H1 (cell line): ENCODE measurements at regions of chr1 and their contacts with region 1.

Region 1: DNA sequence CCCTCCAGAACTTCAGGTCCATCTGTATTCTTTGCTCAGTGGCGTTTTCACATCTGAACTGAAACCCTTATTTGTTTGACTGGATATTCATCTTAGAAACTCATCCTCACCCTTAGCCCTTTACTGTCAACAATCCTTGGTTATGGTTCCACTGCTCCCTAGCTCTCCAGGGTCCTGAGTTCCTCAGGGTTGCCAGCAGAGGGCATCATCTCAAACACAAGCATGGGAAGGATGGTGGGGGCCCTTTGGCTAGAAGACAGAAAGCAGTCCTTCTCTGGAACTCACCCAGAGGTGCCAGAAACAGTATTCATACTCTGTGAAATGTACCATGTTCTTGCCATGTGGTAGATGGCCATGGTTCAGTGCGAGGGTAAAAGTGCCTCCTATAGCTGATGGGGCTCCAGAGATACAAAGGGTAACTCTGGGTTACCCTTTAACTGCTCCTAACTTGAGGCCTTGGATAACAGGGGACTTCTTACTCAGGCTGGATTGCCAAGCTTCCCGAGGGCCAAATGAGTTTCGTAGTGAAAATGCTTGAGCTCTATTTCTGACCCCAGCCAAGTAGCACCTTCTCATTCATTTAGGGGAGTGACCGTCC is 11.3 kb downstream of the NCSTN start:
- DNase-seq: no peak
- H3K4me3 ChIP-seq: no peak overlapping the region
- H3K27ac ChIP-seq: no peak overlapping the region
- H3K4me1 ChIP-seq: no peaks in the 10 kb centered on the region
- H3K27me3 ChIP-seq: no peaks in the 10 kb centered on the region
- CTCF ChIP-seq: peak; percentile 78 to 83 (median 81)
- EP300 ChIP-seq: no peak
- POLR2A ChIP-seq: no peak
- RAD21 ChIP-seq: peak; percentile 65 to 76

Region 2: GRCh38 chr1:160328184-160328583 is 26.3 kb before region 1 on chr1:
- CTCF ChIA-PET with region 1: interaction called, 17 read pairs
- POLR2A ChIA-PET with region 1: no interaction called
- DNase-seq: no peak
- H3K4me3 ChIP-seq: no peak overlapping the region
- H3K27ac ChIP-seq: no peak overlapping the region
- H3K4me1 ChIP-seq: no peaks in the 10 kb centered on the region
- H3K27me3 ChIP-seq: no peaks in the 10 kb centered on the region
- CTCF ChIP-seq: no peak
- EP300 ChIP-seq: no peak
- POLR2A ChIP-seq: no peak
- RAD21 ChIP-seq: no peak

Region 3: DNA sequence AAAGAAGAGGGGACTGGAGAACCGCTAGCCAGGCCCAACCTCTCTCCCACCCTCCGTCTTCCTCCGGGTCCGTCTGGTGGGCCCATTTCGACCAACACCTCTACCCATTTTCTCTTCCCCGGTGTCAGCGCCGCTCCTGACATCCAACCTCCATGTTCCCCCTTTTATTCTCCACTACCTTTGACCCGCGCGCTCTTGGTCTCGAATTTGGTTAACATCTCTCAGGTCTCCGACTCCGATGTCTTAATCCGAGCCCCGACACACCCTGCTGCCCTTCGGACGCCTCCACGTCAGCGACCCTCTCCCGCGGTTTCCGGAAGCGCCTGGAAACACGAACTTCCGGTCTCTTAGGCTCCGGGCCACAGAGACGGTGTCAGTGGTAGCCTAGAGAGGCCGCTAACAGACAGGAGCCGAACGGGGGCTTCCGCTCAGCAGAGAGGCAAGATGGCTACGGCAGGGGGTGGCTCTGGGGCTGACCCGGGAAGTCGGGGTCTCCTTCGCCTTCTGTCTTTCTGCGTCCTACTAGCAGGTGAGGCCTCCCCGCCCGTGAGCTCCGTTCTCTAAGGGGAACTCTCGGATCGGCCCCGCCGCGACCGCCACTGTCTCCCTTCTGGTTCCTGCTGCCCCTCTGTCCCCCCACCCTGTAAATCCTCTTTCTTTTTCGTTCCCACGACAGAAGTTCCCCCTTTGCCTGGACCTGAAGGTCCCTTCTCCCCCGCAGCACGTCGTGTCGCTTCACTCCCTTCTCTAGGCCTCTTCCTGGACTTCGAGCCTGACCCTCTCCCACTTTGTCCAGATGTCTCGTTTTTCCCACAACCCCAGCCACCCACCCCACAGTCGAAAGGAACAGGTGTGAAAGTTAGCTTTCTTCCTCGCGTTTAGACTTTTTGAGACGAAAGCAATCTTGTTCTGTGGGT is 11.3 kb before region 1 on chr1 and contains the starts of genes COPA and NCSTN:
- CTCF ChIA-PET with region 1: interaction called, 18 read pairs
- POLR2A ChIA-PET with region 1: interaction called, 12 read pairs
- DNase-seq: peak; percentile 71 to 90
- H3K4me3 ChIP-seq: peak within 1 kb of the TSS; percentile 88 to 98 (median 94)
- H3K27ac ChIP-seq: peak within 1 kb of the TSS; percentile 88
- H3K4me1 ChIP-seq: no peaks in the 10 kb centered on the region; a peak in 1 of 7 replicates
- H3K27me3 ChIP-seq: no peaks in the 10 kb centered on the region
- CTCF ChIP-seq: no peak
- EP300 ChIP-seq: no peak
- POLR2A ChIP-seq: peak; percentile 86 to 95
- RAD21 ChIP-seq: no peak
- total RNA-seq, gene COPA: 115 TPM in 2 replicates
- total RNA-seq, gene NCSTN: 64.7 and 70.1 TPM in 2 replicates

Region 4: DNA sequence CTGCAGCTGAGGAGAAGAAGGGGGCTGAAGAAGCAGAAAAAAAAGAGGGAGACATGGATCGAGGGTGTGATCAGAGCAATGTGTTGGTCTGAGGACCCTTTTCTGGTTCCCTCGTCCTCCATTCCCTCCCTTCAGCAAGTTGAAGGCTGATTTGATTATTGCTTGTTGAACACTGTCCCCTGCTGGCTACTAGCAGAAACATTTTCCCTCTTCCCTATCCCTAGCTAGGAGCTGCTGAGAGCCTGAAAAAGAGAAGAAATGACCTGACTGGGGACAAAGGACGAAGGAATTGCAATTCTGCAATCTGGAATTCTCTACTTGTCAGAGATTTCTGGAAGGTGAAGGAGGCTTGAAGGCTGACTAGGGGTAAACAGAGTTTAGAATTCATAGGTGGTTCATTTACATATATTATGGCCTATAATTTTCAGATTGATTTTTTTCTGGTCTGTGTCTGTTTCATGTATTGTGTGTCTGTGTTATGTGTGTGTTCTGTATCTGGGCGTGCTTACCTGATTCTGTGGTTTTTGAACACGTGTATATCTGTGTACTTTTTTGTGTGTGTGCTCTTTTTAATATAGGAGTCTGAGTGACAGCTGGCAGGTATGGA is 22.1 kb after region 1 on chr1:
- CTCF ChIA-PET with region 1: interaction called, 683 read pairs
- POLR2A ChIA-PET with region 1: interaction called, 244 read pairs
- DNase-seq: no peak
- H3K4me3 ChIP-seq: peak overlapping the region in 1 of 4 experiments; percentile 30; a peak in 1 of 8 replicates
- H3K27ac ChIP-seq: no peak overlapping the region
- H3K4me1 ChIP-seq: peaks cover 8 to 21% (median 16%) of the 10 kb centered on the region in 4 experiments
- H3K27me3 ChIP-seq: no peaks in the 10 kb centered on the region
- CTCF ChIP-seq: peak; percentile 20 to 100 (median 94)
- EP300 ChIP-seq: no peak
- POLR2A ChIP-seq: no peak
- RAD21 ChIP-seq: peak; percentile 98 to 99

Region 5: GRCh38 chr1:160398823-160399222 is 44.3 kb after region 1 on chr1:
- CTCF ChIA-PET with region 1: interaction called, 11 read pairs
- POLR2A ChIA-PET with region 1: interaction called, 3 read pairs
- DNase-seq: no peak
- H3K4me3 ChIP-seq: no peak overlapping the region
- H3K27ac ChIP-seq: no peak overlapping the region
- H3K4me1 ChIP-seq: peaks cover 10 to 35% (median 21%) of the 10 kb centered on the region in 4 experiments
- H3K27me3 ChIP-seq: no peaks in the 10 kb centered on the region; a peak in 1 of 7 replicates
- CTCF ChIP-seq: no peak
- EP300 ChIP-seq: no peak
- POLR2A ChIP-seq: no peak
- RAD21 ChIP-seq: no peak

Region 6: DNA sequence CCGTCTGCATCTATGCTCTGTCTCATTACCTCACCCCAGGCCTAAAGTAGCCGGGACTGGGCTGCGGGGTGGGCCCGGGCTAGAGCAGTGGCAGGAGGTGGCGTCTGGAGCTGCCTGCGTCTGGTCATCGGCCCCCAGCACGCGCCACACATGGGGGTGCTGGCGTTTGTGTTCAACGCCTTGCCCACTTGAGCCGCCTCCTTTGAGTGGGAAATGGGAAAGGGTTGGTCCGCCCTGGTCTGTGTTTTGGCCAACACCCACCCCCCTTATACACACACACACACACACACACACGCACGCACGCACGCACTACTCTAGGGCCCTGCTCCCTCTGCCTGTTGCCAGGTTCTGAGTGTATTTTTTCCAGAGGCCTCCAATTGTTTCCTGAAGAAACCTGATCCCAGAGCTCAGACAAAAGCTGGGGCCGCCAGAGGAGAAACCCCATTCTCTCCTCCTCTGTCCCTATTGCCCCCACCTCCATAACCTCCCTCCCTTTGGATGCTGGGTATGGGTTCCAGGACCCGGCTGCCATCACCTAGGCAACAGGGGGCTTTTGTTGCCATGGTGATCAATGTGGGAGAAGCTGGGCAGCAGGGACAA is 56.0 kb after region 1 on chr1:
- CTCF ChIA-PET with region 1: interaction called, 70 read pairs
- POLR2A ChIA-PET with region 1: interaction called, 5 read pairs
- DNase-seq: peak in 1 of 2 experiments; percentile 72
- H3K4me3 ChIP-seq: peak overlapping the region in 1 of 4 experiments; percentile 32; a peak in 2 of 8 replicates
- H3K27ac ChIP-seq: peak overlapping the region; percentile 80
- H3K4me1 ChIP-seq: peaks cover 14 to 34% (median 26%) of the 10 kb centered on the region in 4 experiments
- H3K27me3 ChIP-seq: no peaks in the 10 kb centered on the region
- CTCF ChIP-seq: no peak
- EP300 ChIP-seq: no peak
- POLR2A ChIP-seq: no peak
- RAD21 ChIP-seq: no peak

Region 7: DNA sequence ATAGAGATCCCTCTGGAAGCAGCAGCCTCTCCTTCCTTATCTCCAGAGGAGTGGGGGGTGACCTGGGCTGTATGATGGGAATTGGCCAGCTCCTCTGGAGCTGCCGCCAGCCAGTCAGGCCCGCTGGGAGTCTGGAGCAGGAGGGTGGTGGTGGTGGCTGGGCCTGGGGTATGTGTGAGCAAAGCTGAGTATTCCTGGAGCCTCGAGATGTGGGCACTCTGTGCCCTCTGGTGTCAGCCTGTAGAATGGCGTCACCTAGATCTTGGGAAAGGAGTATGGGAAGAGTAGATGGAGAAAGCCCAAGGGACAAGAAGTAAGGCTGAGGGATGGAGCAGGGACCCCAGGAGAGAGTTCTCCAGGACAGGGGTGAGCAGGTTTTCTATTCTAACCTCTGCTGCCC is 61.9 kb after region 1 on chr1:
- CTCF ChIA-PET with region 1: interaction called, 70 read pairs
- POLR2A ChIA-PET with region 1: interaction called, 5 read pairs
- DNase-seq: no peak
- H3K4me3 ChIP-seq: no peak overlapping the region
- H3K27ac ChIP-seq: no peak overlapping the region
- H3K4me1 ChIP-seq: peaks cover 1 to 2% (median 2%) of the 10 kb centered on the region in 4 experiments; a peak in 6 of 7 replicates
- H3K27me3 ChIP-seq: no peaks in the 10 kb centered on the region
- CTCF ChIP-seq: peak; percentile 63 to 76 (median 69)
- EP300 ChIP-seq: no peak
- POLR2A ChIP-seq: no peak
- RAD21 ChIP-seq: peak; percentile 81 to 88